CD4-positive, alpha-beta memory T cell (primary cell): ENCODE measurements at regions of chr3 and their contacts with region 1.

Region 1: DNA sequence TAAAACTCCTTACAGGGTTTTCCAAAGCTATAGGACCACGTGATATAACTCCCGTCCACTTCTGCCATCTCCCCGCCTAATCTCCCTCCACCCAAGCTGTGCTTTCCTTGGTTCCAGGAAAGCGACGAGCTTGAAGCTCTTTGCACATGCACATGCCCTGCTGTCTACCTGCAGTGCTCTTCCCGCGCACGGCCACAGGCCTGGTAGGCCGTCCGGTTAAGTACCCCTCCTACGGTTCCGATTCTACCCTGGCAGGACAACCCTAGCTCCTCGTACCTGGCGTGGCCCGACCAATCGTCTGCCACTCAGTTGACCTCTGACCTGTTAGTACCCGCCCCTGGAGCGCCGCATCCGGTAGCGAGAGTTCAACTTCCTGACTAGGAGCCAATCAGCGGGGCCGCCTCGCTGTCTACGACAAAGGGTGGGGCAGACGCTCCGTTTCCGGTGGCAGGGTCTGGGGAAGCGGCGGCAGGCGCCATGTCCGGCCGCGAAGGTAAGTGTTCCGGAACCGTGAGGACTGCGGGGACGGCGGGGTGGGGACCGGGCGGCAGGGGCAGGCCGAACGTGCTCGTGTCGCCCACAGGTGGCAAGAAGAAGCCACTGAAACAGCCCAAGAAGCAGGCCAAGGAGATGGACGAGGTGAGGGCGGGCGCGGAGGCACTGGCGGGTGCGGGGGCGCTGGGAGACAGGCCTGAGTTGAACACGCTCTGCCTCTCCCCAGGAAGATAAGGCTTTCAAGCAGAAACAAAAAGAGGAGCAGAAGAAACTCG is at the starts of genes CCDC51 and TMA7:
- DNase-seq: peak; percentile 96 to 99 (median 97)
- H3K4me3 ChIP-seq: peak within 1 kb of the TSS; percentile 93 to 95
- H3K4me3 Mint-ChIP-seq: peak within 1 kb of the TSS; percentile 86 to 99 (median 93)
- H3K27ac ChIP-seq: peak within 1 kb of the TSS; percentile 86
- H3K27ac Mint-ChIP-seq: peak within 1 kb of the TSS; percentile 91 to 100 (median 99)
- H3K4me1 ChIP-seq: peaks cover 32% of the 10 kb centered on the region
- H3K4me1 Mint-ChIP-seq: peaks cover 16 to 40% (median 32%) of the 10 kb centered on the region in 4 donors
- H3K27me3 ChIP-seq: no peaks in the 10 kb centered on the region
- H3K27me3 Mint-ChIP-seq: no peaks in the 10 kb centered on the region
- total RNA-seq, gene CCDC51: 5.1 to 5.4 TPM
- total RNA-seq, gene TMA7: 309 to 310 TPM

Region 2: GRCh38 chr3:48240711-48241491 is 199.1 kb before region 1 on chr3 and contains the start of gene ZNF589:
- CTCF ChIA-PET with region 1: interaction called, 35 read pairs
- POLR2A ChIA-PET with region 1: interaction called, 7 read pairs
- intact Hi-C with region 1: no loop called
- DNase-seq: peak; percentile 90 to 96 (median 94)
- H3K4me3 ChIP-seq: peak within 1 kb of the TSS; percentile 64 to 99
- H3K4me3 Mint-ChIP-seq: peak within 1 kb of the TSS; percentile 87 to 97 (median 92)
- H3K27ac ChIP-seq: peak within 1 kb of the TSS; percentile 69
- H3K27ac Mint-ChIP-seq: peak within 1 kb of the TSS; percentile 87 to 96 (median 92)
- H3K4me1 ChIP-seq: peaks cover 30% of the 10 kb centered on the region
- H3K4me1 Mint-ChIP-seq: peaks cover 8 to 26% (median 11%) of the 10 kb centered on the region in 4 donors
- H3K27me3 ChIP-seq: no peaks in the 10 kb centered on the region
- H3K27me3 Mint-ChIP-seq: no peaks in the 10 kb centered on the region
- total RNA-seq, gene ZNF589: 49.4 to 58.6 TPM

Region 3: GRCh38 chr3:48394391-48394790 is 45.6 kb before region 1 on chr3:
- CTCF ChIA-PET with region 1: interaction called, 381 read pairs
- POLR2A ChIA-PET with region 1: no interaction called
- intact Hi-C with region 1: no loop called
- DNase-seq: no peak
- H3K4me3 ChIP-seq: no peak overlapping the region
- H3K4me3 Mint-ChIP-seq: no peak overlapping the region
- H3K27ac ChIP-seq: no peak overlapping the region
- H3K27ac Mint-ChIP-seq: no peak overlapping the region
- H3K4me1 ChIP-seq: no peaks in the 10 kb centered on the region
- H3K4me1 Mint-ChIP-seq: no peaks in the 10 kb centered on the region
- H3K27me3 ChIP-seq: no peaks in the 10 kb centered on the region
- H3K27me3 Mint-ChIP-seq: peaks cover 11 to 24% of the 10 kb centered on the region in 2 donors

Region 4: DNA sequence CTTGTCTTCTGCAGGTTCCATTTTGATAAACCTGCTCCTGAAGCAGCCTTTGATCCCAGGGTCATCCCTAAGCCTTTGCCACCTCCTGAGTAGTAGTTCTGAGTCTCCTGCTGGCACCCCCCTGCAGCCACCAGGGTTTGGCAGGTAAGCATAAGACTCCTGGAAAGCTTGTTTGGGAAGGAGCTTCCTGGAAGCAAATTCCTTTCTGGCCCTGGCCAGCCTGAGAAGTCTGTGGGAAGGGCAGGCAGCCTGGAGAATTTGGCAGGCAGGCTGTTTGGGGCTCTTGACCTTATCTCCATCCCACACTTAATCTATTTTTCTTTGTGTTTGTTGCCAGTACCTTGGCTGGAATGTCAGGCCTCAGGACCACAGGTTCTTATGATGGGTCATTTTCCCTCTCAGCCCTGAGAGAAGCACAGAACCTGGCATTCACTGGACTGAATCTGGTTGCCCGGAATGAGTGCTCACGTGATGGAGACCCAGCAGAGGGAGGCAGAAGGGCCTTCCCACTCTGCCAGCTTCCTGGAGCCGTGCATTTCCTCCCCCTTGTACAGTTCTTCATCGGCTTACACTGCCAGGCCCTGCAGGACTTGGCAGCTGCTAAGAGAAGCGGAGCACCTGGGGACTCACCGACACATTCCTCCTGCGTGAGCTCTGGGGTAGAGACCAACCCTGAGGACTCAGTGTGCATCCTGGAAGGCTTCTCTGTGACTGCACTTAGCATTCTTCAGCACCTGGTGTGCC is 19.9 kb after region 1 on chr3:
- CTCF ChIA-PET with region 1: interaction called, 36 read pairs
- POLR2A ChIA-PET with region 1: interaction called, 51 read pairs
- intact Hi-C with region 1: no loop called
- DNase-seq: no peak
- H3K4me3 ChIP-seq: no peak overlapping the region
- H3K4me3 Mint-ChIP-seq: no peak overlapping the region
- H3K27ac ChIP-seq: no peak overlapping the region
- H3K27ac Mint-ChIP-seq: peak overlapping the region in 1 of 7 donors; percentile 60
- H3K4me1 ChIP-seq: no peaks in the 10 kb centered on the region
- H3K4me1 Mint-ChIP-seq: peaks cover 0 to 10% (median 6%) of the 10 kb centered on the region in 4 donors
- H3K27me3 ChIP-seq: no peaks in the 10 kb centered on the region
- H3K27me3 Mint-ChIP-seq: no peaks in the 10 kb centered on the region

Region 5: GRCh38 chr3:48500656-48501055 is 60.7 kb after region 1 on chr3:
- CTCF ChIA-PET with region 1: interaction called, 215 read pairs
- POLR2A ChIA-PET with region 1: interaction called, 18 read pairs
- intact Hi-C with region 1: no loop called
- DNase-seq: no peak
- H3K4me3 ChIP-seq: no peak overlapping the region
- H3K4me3 Mint-ChIP-seq: peak overlapping the region in 1 of 8 donors; percentile 25
- H3K27ac ChIP-seq: no peak overlapping the region
- H3K27ac Mint-ChIP-seq: peak overlapping the region in 4 of 7 donors; percentile 56 to 86 (median 74)
- H3K4me1 ChIP-seq: peaks cover 45% of the 10 kb centered on the region
- H3K4me1 Mint-ChIP-seq: peaks cover 30 to 52% (median 42%) of the 10 kb centered on the region in 4 donors
- H3K27me3 ChIP-seq: no peaks in the 10 kb centered on the region
- H3K27me3 Mint-ChIP-seq: no peaks in the 10 kb centered on the region

Region 6: DNA sequence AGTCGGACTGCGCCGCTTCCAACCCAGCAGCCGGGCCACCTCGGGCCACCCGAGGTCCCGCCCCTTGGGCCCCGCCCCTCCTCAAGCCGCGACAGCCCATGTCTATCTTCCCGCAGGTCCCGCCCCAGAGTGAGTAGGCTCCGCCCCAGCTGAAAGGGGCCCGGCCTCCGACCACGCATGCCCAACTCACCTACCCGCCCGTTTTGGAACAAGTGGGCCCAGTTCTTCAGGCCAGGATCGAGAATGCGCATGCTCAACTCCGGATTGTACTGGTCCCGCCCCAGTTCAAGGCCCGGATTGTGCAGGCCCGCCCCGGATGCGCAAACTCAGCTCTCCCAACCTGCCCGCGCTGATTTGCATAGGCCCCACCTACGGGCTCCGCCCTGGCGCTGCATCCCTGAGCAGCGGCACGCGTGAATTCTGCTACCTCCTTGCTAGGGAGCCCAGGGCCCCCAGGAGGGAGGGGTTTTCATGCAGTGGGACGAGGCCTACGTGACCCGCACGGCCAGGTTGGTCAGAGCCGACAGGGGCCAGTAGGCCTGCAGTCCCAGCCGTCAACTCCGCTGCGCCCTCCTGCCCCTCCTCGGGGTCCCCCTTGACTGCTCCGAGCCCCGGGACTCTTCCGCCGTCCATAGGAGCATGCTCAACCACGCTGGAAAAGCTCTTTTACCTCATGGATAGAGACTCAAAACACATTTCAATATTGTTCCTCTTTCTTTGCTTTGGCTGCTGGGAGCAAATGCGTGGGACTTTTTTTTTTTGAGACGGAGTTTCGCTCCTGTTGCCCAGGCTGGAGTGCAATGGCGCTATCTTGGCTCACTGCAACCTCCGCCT is 117.0 kb after region 1 on chr3 and contains the start of gene PFKFB4:
- CTCF ChIA-PET with region 1: interaction called, 118 read pairs
- POLR2A ChIA-PET with region 1: interaction called, 14 read pairs
- intact Hi-C with region 1: loop called (anchors 1 kb)
- DNase-seq: peak; percentile 99 to 100 (median 100)
- H3K4me3 ChIP-seq: peak within 1 kb of the TSS; percentile 69 to 82
- H3K4me3 Mint-ChIP-seq: peak within 1 kb of the TSS; percentile 77 to 96 (median 87)
- H3K27ac ChIP-seq: peak within 1 kb of the TSS; percentile 39
- H3K27ac Mint-ChIP-seq: peak within 1 kb of the TSS; percentile 66 to 89 (median 78)
- H3K4me1 ChIP-seq: peaks cover 23% of the 10 kb centered on the region
- H3K4me1 Mint-ChIP-seq: peaks cover 5 to 22% (median 17%) of the 10 kb centered on the region in 4 donors
- H3K27me3 ChIP-seq: no peaks in the 10 kb centered on the region
- H3K27me3 Mint-ChIP-seq: no peaks in the 10 kb centered on the region
- total RNA-seq, gene PFKFB4: 2.6 to 2.7 TPM